Activated naive CD4-positive, alpha-beta T cell treated with anti-CD3 and anti-CD28 coated beads for 36 hours (primary cell): ENCODE measurements at regions of chr5 and their contacts with region 1.

Region 1: GRCh38 chr5:176447982-176448608 is at the start of gene FAF2:
- DNase-seq: peak; percentile 98
- H3K4me3 Mint-ChIP-seq: peak within 1 kb of the TSS; percentile 99
- H3K27ac Mint-ChIP-seq: peak within 1 kb of the TSS; percentile 97
- H3K4me1 Mint-ChIP-seq: peaks cover 37% of the 10 kb centered on the region
- H3K27me3 Mint-ChIP-seq: no peaks in the 10 kb centered on the region
- total RNA-seq, gene FAF2: 30.0 to 32.8 TPM

Region 2: GRCh38 chr5:176361437-176362232 is 86.5 kb before region 1 on chr5 and contains the start of gene KIAA1191:
- CTCF ChIA-PET with region 1: no interaction called
- intact Hi-C with region 1: loop called (anchors 2 kb)
- DNase-seq: peak; percentile 97
- H3K4me3 Mint-ChIP-seq: peak within 1 kb of the TSS; percentile 99
- H3K27ac Mint-ChIP-seq: peak within 1 kb of the TSS; percentile 91
- H3K4me1 Mint-ChIP-seq: peaks cover 31% of the 10 kb centered on the region
- H3K27me3 Mint-ChIP-seq: no peaks in the 10 kb centered on the region
- total RNA-seq, gene KIAA1191: 33.5 to 33.7 TPM

Region 3: DNA sequence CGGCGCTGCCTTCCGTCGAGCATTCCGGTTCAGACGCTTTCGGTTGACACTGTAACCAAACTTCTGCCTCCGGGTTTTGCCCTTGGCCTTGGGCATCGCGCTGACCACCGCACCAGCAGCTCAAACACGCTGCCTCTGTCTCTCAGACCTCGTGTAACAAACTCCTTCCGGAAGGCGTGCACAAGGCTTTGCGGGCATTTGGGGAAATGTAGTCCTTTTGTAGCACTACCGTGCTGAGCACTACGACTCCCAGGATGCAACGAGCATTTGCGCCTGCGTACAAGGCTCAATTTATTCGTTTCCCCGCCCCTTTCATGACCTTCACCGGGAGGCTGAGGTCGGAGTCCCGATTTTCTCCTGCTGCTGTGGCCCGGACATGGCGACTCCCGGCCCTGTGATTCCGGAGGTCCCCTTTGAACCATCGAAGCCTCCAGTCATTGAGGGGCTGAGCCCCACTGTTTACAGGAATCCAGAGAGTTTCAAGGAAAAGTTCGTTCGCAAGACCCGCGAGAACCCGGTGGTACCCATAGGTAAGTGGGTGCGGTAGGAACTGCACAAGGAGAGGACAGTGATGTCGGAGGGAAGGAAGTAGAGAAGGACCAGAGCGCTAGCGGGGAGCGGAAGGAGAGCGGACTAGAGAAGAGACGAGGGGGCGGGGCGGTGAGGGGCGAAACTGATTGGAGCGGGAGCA is 59.5 kb before region 1 on chr5 and contains the starts of genes HIGD2A and NOP16:
- CTCF ChIA-PET with region 1: interaction called, 3 read pairs
- intact Hi-C with region 1: loop called (anchors 1 kb)
- DNase-seq: peak; percentile 100
- H3K4me3 Mint-ChIP-seq: peak within 1 kb of the TSS; percentile 100
- H3K27ac Mint-ChIP-seq: peak within 1 kb of the TSS; percentile 100
- H3K4me1 Mint-ChIP-seq: peaks cover 33% of the 10 kb centered on the region
- H3K27me3 Mint-ChIP-seq: no peaks in the 10 kb centered on the region
- total RNA-seq, gene HIGD2A: 154 to 155 TPM
- total RNA-seq, gene NOP16: 42.1 to 43.1 TPM

Region 4: DNA sequence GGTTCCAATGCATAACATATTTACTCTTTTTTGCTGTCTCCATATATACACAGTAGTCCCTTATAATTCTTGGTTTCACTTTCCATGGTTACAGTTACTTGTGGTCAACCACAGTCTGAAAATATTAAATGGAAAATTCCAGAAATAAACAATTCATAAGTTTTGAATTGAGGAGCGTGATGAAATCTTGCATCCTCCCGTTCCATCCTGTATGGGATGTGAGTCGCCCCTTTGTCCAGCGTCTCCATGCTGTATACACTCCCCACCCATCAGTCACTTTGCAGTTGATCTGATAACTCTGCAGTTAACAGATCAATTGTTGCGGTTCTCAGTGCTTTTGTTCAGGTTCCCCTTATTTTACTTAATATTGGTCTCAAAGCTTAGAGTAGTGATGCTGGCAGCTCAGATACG is 11.4 kb before region 1 on chr5:
- CTCF ChIA-PET with region 1: interaction called, 13 read pairs
- intact Hi-C with region 1: no loop called
- DNase-seq: peak; percentile 18
- H3K4me3 Mint-ChIP-seq: peak overlapping the region; percentile 37
- H3K27ac Mint-ChIP-seq: no peak overlapping the region
- H3K4me1 Mint-ChIP-seq: peaks cover 10% of the 10 kb centered on the region
- H3K27me3 Mint-ChIP-seq: no peaks in the 10 kb centered on the region

Region 5: GRCh38 chr5:176463113-176463764 is 15.1 kb after region 1 on chr5:
- CTCF ChIA-PET with region 1: interaction called, 11 read pairs
- intact Hi-C with region 1: no loop called
- DNase-seq: no peak
- H3K4me3 Mint-ChIP-seq: no peak overlapping the region
- H3K27ac Mint-ChIP-seq: no peak overlapping the region
- H3K4me1 Mint-ChIP-seq: peaks cover 25% of the 10 kb centered on the region
- H3K27me3 Mint-ChIP-seq: no peaks in the 10 kb centered on the region

Region 6: DNA sequence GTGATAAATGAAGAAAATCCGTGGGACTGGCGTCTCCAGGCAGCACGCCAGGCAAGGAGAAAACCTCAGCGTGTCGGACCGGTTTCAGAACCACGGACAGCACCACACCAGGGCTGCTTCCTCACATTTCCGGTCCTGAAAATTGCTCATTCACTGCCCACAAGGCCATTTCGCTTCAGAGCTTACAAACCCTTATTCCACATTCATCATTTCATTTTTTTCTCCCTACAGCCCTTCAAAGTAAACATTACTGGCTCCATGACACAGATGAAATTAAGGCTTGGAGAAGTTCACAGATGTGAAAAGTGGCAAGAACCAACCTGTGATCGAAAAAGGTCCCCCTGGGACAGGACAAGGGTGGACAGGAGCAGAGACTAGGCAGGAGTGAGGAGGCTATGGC is 163.3 kb after region 1 on chr5:
- CTCF ChIA-PET with region 1: no interaction called
- intact Hi-C with region 1: loop called (anchors 1 kb)
- DNase-seq: peak; percentile 72
- H3K4me3 Mint-ChIP-seq: no peak overlapping the region
- H3K27ac Mint-ChIP-seq: no peak overlapping the region
- H3K4me1 Mint-ChIP-seq: peaks cover 7% of the 10 kb centered on the region
- H3K27me3 Mint-ChIP-seq: peaks cover 30% of the 10 kb centered on the region